Cardiac septum (tissue), 1 donor: ENCODE measurements at regions of chr7 and their contacts with region 1.

Region 1: GRCh38 chr7:44650772-44651171 is 44.3 kb downstream of the OGDH start:
- DNase-seq: no peak

Region 2: DNA sequence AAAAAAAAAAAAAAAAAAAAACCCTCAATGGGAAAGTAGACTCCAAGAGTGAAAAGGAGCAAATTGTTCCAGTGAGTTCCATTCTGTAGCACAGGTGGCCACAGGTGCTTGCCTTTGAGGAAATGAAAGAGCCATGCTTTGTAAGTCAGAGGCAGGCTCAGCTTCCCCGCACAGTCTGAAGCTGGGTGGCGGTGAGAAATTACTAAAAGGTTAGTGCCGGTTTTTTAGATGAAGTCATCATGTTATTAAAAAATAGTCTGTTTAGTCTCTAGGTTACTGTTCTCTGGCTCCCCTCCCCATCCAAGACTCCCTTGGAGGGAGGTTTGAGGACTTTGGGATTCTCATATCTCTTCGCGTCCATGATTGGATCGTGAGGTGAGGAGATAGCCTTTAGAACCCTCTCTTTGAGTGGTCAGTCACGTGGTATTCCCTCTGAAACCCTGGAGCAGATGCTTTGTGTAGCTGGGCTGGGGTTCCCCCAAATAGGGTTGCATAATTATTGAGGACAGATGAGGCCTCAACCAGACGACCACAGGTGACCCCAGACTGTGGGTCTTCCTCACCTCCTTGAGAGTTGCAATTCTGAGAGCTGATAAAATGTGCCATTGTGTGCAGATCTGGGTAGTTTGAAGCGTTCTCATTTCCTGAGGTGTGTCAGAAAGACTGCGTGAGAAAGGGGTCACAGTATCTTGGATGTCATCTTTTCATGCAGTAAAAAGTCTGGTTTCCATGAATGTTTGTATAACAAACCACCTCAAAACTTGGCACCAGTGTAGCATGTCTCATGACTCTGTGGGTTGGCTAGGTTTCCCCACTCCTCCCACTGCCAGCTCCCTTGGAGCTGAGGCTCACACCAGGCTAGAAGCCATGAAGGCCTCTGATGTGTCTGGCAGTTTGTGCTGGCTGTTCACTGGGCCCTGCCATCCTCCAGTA is 17.3 kb before region 1 on chr7:
- intact Hi-C with region 1: loop called (anchors 2 kb)
- DNase-seq: no peak

Region 3: DNA sequence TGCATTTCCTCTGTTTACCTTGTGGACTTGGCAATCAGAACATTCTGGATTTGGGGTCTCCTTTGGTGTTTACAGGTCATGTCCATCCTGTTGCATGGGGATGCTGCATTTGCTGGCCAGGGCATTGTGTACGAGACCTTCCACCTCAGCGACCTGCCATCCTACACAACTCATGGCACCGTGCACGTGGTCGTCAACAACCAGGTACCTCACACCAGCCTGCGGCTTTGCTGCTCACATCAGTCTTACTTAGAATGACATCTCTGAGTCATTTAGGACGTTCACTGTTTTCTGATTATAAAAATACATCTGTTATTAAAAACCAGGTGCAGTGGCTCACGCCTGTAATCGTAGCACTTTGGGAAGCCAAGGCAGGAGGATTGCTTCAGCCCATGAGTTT is 30.9 kb after region 1 on chr7:
- intact Hi-C with region 1: loop called (anchors 5 kb)
- DNase-seq: no peak